Naive thymus-derived CD4-positive, alpha-beta T cell (primary cell): ENCODE measurements at regions of chr2 and their contacts with region 1.

Region 1: GRCh38 chr2:64831134-64831976 is 157.8 kb upstream of the SLC1A4 start:
- DNase-seq: peak; percentile 61 to 89 (median 78)
- ATAC-seq: peak; percentile 95
- H3K4me3 ChIP-seq: peak overlapping the region; percentile 7
- H3K4me3 Mint-ChIP-seq: peak overlapping the region in 1 of 10 donors; percentile 8
- H3K27ac ChIP-seq: no peak overlapping the region
- H3K27ac Mint-ChIP-seq: peak overlapping the region in 1 of 9 donors; percentile 72
- H3K4me1 ChIP-seq: peaks cover 0 to 9% of the 10 kb centered on the region in 2 donors
- H3K4me1 Mint-ChIP-seq: peaks cover 0 to 25% (median 4%) of the 10 kb centered on the region in 7 donors
- H3K27me3 ChIP-seq: no peaks in the 10 kb centered on the region
- H3K27me3 Mint-ChIP-seq: peaks cover 0 to 9% (median 4%) of the 10 kb centered on the region in 5 donors

Region 2: GRCh38 chr2:64348386-64349130 is 482.8 kb before region 1 on chr2:
- CTCF ChIA-PET with region 1: no interaction called
- POLR2A ChIA-PET with region 1: no interaction called
- intact Hi-C with region 1: no loop called
- DNase-seq: no peak
- ATAC-seq: no peak
- H3K4me3 ChIP-seq: no peak overlapping the region
- H3K4me3 Mint-ChIP-seq: no peak overlapping the region
- H3K27ac ChIP-seq: no peak overlapping the region
- H3K27ac Mint-ChIP-seq: no peak overlapping the region
- H3K4me1 ChIP-seq: no peaks in the 10 kb centered on the region
- H3K4me1 Mint-ChIP-seq: no peaks in the 10 kb centered on the region
- H3K27me3 ChIP-seq: no peaks in the 10 kb centered on the region
- H3K27me3 Mint-ChIP-seq: peaks cover 0 to 18% (median 0%) of the 10 kb centered on the region in 5 donors

Region 3: DNA sequence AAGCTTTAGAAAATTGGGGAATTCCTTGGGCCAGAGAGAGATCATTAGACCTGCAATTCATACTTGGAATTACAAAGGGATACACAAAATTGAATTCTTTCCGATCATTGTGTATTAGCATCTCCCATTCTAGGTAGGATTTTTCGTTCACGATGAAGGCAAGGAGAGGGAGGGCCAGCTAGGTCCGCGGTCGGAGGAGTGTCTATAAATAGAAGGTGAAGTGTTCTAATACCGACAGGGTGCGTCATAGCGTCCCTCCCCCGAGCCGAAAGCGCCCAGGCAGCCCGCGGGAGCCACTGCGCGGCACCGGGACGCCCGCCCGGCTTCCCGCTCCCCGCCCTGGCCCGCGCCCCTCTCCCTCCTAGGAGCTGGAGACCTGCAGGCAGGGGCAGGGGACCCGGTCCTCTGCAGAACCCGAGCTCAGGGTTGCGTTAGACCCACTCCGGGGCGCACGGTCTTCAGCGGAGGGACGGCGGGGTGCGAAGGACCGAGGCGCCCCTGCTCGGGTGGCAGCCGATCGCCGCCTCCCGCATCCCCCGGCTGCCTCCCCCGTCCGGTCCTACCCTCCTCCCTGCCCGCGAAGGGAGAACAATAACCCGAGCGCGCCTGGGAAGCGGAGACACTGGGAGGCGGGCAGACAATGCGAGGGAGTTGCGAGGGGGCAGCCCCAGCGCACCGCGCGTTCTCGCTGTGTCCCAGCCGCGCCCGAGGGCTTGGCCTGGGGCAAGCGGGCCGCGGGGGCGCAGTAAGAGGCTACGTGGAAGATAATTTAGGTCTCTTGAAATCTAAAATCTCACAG is 63.5 kb before region 1 on chr2:
- CTCF ChIA-PET with region 1: interaction called, 8 read pairs
- POLR2A ChIA-PET with region 1: no interaction called
- intact Hi-C with region 1: loop called (anchors 1 kb)
- DNase-seq: peak; percentile 35 to 78 (median 55)
- ATAC-seq: peak; percentile 89
- H3K4me3 ChIP-seq: peak overlapping the region; percentile 80
- H3K4me3 Mint-ChIP-seq: peak overlapping the region; percentile 90 to 99 (median 96)
- H3K27ac ChIP-seq: peak overlapping the region; percentile 73
- H3K27ac Mint-ChIP-seq: peak overlapping the region; percentile 92 to 97 (median 95)
- H3K4me1 ChIP-seq: peaks cover 3 to 12% of the 10 kb centered on the region in 2 donors
- H3K4me1 Mint-ChIP-seq: peaks cover 9 to 40% (median 23%) of the 10 kb centered on the region in 7 donors
- H3K27me3 ChIP-seq: no peaks in the 10 kb centered on the region
- H3K27me3 Mint-ChIP-seq: peaks cover 0 to 15% (median 0%) of the 10 kb centered on the region in 5 donors

Region 4: DNA sequence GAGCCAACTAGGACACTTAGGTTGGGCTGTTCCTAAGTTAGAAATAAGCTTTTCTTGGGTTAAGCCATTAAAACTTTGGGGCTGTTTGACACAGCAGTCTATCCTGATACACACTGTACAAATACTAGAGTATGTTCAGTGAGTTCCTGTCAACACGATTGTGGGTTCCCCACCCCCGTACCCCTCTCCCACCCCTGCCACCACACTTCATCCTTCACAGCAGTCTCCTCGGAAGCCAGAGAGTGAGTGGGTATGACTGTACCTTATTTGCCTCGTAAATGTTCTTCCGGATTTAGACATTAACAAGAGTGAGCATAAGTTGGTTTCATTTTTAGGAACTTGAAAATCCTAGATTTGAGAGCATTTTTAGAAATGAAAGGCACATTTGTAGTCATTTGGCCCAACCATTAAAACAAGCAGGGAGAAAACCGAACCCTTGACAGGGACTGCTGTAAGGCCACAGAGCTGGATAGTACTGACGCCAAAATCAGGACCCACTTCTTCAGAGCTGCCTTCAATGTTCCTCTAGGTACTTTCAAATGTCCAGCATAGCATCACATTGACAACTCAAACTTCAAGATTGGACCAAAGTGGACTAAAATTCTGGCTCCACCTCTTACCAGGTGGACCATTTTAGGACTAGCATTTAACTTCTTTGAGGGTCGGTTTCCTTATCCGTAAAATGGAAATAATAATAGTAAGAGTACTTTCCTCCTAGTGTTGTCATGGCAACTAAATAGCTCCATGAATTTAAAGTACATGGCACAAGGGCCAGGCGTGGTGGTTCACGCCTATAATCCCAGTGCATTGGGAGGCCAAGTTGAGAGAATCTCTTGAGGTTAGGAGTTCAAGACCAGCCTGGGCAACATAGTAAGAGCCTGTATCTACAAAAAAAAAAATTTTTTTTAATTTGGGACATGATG is 11.3 kb before region 1 on chr2:
- CTCF ChIA-PET with region 1: interaction called, 12 read pairs
- POLR2A ChIA-PET with region 1: interaction called, 10 read pairs
- intact Hi-C with region 1: loop called in 1 of 2 experiments (anchors 1 kb)
- DNase-seq: peak in 8 of 9 donors; percentile 36 to 81 (median 66)
- ATAC-seq: peak; percentile 95
- H3K4me3 ChIP-seq: peak overlapping the region; percentile 19
- H3K4me3 Mint-ChIP-seq: peak overlapping the region; percentile 46 to 88 (median 77)
- H3K27ac ChIP-seq: peak overlapping the region; percentile 59
- H3K27ac Mint-ChIP-seq: peak overlapping the region; percentile 87 to 97 (median 95)
- H3K4me1 ChIP-seq: peaks cover 19 to 25% of the 10 kb centered on the region in 2 donors
- H3K4me1 Mint-ChIP-seq: peaks cover 12 to 41% (median 31%) of the 10 kb centered on the region in 7 donors
- H3K27me3 ChIP-seq: no peaks in the 10 kb centered on the region
- H3K27me3 Mint-ChIP-seq: no peaks in the 10 kb centered on the region

Region 5: GRCh38 chr2:64865073-64865830 is 33.9 kb after region 1 on chr2:
- CTCF ChIA-PET with region 1: no interaction called
- POLR2A ChIA-PET with region 1: no interaction called
- intact Hi-C with region 1: loop called (anchors 1 kb)
- DNase-seq: peak; percentile 30 to 82 (median 72)
- ATAC-seq: peak; percentile 87
- H3K4me3 ChIP-seq: peak overlapping the region; percentile 88
- H3K4me3 Mint-ChIP-seq: peak overlapping the region in 7 of 10 donors; percentile 72 to 86 (median 81)
- H3K27ac ChIP-seq: peak overlapping the region; percentile 40
- H3K27ac Mint-ChIP-seq: no peak overlapping the region
- H3K4me1 ChIP-seq: peaks cover 0 to 5% of the 10 kb centered on the region in 2 donors
- H3K4me1 Mint-ChIP-seq: peaks cover 0 to 5% (median 0%) of the 10 kb centered on the region in 7 donors
- H3K27me3 ChIP-seq: peaks cover 0 to 3% of the 10 kb centered on the region in 2 donors
- H3K27me3 Mint-ChIP-seq: peaks cover 0 to 17% (median 8%) of the 10 kb centered on the region in 5 donors